GM12878 (cell line): ENCODE measurements at regions of chr5 and their contacts with region 1.

Region 1: DNA sequence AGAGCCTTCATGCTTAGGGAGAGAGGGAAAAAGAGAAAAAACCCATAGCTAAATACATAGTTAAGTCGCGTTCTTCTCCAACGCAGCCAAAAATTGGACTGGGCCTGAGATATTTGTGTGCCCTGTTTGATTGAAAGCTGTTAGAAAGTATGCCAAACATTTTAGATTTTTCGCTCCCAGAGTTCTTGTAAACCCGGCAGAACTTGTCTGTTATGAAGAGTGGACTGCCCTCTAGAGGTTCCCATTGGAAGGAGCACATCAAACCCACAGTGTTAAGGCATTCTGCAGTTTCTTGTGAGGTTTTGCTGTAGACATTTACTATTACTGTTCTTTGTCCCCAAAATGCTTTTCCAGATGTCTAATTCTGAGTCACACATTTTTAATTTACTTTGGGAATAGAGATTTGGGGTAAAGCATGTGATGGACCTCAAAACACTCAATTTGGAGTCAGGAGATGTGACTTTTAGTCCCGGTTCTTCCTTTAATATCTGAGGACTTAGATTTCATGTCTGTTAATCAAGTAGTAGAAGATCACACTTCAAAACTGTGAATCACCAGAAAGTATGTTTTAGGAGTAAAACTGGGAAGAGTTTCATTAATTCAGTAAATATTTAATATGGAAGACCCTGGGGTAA is 96.6 kb downstream of the PCSK1 start:
- DNase-seq: no peak
- ATAC-seq: peak; percentile 92
- H3K4me3 ChIP-seq: no peak overlapping the region
- H3K27ac ChIP-seq: no peak overlapping the region
- H3K4me1 ChIP-seq: peaks cover 27% of the 10 kb centered on the region
- H3K27me3 ChIP-seq: no peaks in the 10 kb centered on the region; a peak in 1 of 4 replicates
- CTCF ChIP-seq: peak; percentile 87 to 92 (median 88)
- EP300 ChIP-seq: no peak
- POLR2A ChIP-seq: no peak
- RAD21 ChIP-seq: peak; percentile 96

Region 2: GRCh38 chr5:95846554-95847260 is 489.8 kb before region 1 on chr5:
- CTCF ChIA-PET with region 1: interaction called, 360 read pairs
- POLR2A ChIA-PET with region 1: interaction called, 5 read pairs
- RAD21 ChIA-PET with region 1: interaction called, 182 read pairs
- SMC1A ChIA-PET with region 1: interaction called, 289 read pairs
- in situ Hi-C with region 1: no loop called
- intact Hi-C with region 1: no loop called
- DNase-seq: no peak
- ATAC-seq: peak; percentile 82
- H3K4me3 ChIP-seq: no peak overlapping the region
- H3K27ac ChIP-seq: no peak overlapping the region
- H3K4me1 ChIP-seq: peaks cover 12% of the 10 kb centered on the region
- H3K27me3 ChIP-seq: no peaks in the 10 kb centered on the region
- CTCF ChIP-seq: peak; percentile 88 to 97 (median 95); a peak in 5 of 6 replicates
- EP300 ChIP-seq: no peak
- POLR2A ChIP-seq: no peak
- RAD21 ChIP-seq: peak; percentile 98

Region 3: DNA sequence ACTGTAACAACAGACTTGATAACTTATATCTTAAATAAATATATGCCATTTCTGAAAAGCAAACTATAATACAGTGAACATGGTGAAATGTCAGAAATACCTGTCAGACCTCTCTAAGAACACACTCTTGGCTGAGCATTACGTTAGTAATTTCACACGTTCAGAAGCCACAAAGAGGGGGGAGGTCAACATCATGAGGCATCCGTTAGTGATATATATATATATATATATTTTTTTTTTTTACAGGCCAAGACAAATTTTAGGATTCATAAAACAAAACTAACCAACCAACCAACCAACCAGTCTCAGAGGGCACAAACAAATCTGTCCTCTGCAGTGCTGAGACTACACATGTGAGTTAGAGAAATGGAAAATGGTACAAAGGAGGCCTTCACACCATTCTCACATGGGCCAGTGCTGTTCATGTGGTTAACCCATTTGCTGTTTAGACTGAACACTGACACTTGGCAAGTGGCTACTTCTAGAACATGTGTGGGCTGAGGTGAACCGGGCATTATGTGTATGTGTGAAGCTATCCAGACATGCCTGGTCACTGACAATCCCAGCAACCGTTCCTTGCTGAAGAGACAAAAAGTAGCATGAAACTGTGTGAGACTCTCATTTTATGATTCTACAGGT is 429.3 kb before region 1 on chr5:
- CTCF ChIA-PET with region 1: interaction called, 7 read pairs
- POLR2A ChIA-PET with region 1: no interaction called
- RAD21 ChIA-PET with region 1: interaction called, 3 read pairs
- SMC1A ChIA-PET with region 1: interaction called, 12 read pairs
- in situ Hi-C with region 1: no loop called
- intact Hi-C with region 1: no loop called
- DNase-seq: no peak
- ATAC-seq: peak; percentile 76
- H3K4me3 ChIP-seq: no peak overlapping the region
- H3K27ac ChIP-seq: peak overlapping the region; percentile 11; the same call in 1 of the 2 replicates
- H3K4me1 ChIP-seq: peaks cover 11% of the 10 kb centered on the region
- H3K27me3 ChIP-seq: no peaks in the 10 kb centered on the region
- CTCF ChIP-seq: no peak
- EP300 ChIP-seq: no peak
- POLR2A ChIP-seq: no peak
- RAD21 ChIP-seq: no peak

Region 4: DNA sequence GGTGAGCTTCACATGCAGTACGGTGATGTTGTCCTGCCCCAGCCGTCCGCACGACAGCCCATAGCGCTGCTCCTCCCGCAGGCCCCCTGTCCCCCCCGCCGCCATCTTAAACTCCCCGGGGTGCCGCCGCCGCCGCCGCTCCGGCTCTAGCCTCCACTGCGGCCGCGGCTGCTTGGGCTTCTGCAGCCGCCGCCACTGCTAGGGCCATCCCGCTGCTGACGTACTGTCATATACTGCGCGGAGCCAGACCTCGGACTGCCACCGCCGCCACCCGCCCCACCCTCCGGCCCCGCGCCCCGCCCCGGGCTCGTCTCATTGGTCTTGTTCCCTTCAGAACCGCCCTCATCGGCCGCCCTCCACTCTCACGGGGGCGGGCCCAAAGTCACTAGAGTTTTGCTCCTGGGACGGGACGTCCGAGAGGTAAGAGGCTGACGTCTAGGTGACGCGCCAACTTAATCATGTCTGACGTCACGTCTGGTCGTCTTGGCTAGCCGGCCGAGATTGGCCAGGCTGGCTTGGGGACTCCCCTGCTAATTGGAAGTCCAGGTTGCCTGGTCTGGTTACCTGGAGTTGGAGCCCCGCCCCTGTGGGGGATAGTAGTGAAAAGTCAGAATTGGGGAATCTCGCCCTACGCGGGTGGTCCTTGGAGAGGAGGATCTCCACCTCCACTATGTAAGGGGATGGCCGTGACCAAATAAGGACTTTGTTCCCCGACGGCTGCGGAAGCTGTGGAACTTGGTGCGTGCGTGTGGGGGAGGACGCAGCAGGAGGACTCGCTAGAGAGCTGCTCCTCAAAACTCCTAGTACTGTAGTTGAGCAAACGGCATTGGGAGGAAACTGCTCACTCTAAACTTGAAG is 374.6 kb before region 1 on chr5 and contains the start of gene ELL2:
- CTCF ChIA-PET with region 1: interaction called, 29 read pairs
- POLR2A ChIA-PET with region 1: interaction called, 3 read pairs
- RAD21 ChIA-PET with region 1: interaction called, 63 read pairs
- SMC1A ChIA-PET with region 1: interaction called, 61 read pairs
- in situ Hi-C with region 1: loop called (anchors 5 kb)
- intact Hi-C with region 1: loop called (anchors 1 kb)
- DNase-seq: peak; percentile 89
- ATAC-seq: peak; percentile 78
- H3K4me3 ChIP-seq: peak within 1 kb of the TSS; percentile 86
- H3K27ac ChIP-seq: peak within 1 kb of the TSS; percentile 95
- H3K4me1 ChIP-seq: 0 out of 2 replicates have a peak, but pooled peaks cover 3% of the 10 kb centered on the region
- H3K27me3 ChIP-seq: no peaks in the 10 kb centered on the region
- CTCF ChIP-seq: no peak
- EP300 ChIP-seq: no peak
- POLR2A ChIP-seq: peak; percentile 79
- RAD21 ChIP-seq: no peak
- polyA plus RNA-seq, gene ELL2: 24.2 to 34.4 TPM

Region 5: DNA sequence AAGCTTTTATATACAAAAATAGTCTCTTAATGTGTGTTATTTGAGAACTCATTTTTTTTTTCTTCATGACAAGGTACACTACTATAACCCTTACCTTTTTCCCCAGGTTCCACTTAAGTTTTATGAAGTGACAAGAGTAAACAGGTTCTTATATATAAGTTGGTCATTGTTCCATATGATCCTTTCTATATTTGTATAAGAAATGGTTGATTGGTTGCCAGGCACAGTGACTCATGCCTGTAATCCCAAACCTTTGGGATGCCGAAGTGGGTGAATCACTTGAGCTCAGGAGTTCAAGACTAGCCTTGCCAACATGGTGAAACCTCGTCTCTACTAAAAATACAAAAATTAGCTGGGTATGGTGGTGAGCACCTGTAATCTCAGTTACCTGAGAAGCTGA is 11.8 kb before region 1 on chr5:
- CTCF ChIA-PET with region 1: interaction called, 33 read pairs
- POLR2A ChIA-PET with region 1: no interaction called
- RAD21 ChIA-PET with region 1: interaction called, 11 read pairs
- SMC1A ChIA-PET with region 1: interaction called, 11 read pairs
- in situ Hi-C with region 1: no loop called
- intact Hi-C with region 1: no loop called
- DNase-seq: no peak
- ATAC-seq: no peak
- H3K4me3 ChIP-seq: no peak overlapping the region
- H3K27ac ChIP-seq: no peak overlapping the region
- H3K4me1 ChIP-seq: peaks cover 5% of the 10 kb centered on the region; the same call in 1 of the 2 replicates
- H3K27me3 ChIP-seq: no peaks in the 10 kb centered on the region
- CTCF ChIP-seq: no peak
- EP300 ChIP-seq: no peak
- POLR2A ChIP-seq: no peak
- RAD21 ChIP-seq: no peak